Caco-2 (cell line): ENCODE measurements at regions of chr5 and their contacts with region 1.

Region 1: DNA sequence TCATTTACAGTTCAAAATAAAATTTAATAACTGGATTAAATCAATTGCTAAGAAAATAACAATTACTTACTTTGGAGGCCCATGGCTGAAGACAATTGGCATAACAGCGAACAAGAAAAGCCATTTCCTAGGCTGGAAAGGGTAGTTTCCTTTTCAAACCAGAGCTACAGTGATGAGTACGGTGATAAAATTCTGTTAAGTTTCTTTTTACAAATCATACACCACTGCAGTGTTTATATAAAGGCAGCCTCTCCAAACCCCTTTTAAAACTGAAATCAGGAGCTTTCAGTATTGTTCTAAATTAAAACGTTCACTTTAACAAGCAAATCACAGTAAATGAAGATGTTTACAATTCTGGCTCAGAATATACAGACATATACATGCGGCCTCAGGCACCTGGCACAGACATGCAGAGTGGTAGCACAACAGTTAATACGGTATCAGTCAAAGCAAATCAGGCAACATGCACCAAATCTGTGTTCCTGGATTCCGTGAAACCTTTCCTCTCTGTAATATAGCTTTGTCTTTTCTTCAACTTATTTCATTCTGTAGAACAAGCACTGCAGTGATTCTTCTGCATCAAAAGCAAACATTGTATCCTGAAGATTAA is 102.9 kb downstream of the RAPGEF6 start:
- DNase-seq: no peak
- H3K4me3 ChIP-seq: no peak overlapping the region
- H3K4me3 Mint-ChIP-seq: no peak overlapping the region
- H3K27ac Mint-ChIP-seq: no peak overlapping the region
- H3K4me1 ChIP-seq: peaks cover 5% of the 10 kb centered on the region; the same call in 1 of the 2 replicates
- H3K4me1 Mint-ChIP-seq: peaks cover 7% of the 10 kb centered on the region
- H3K27me3 ChIP-seq: no peaks in the 10 kb centered on the region
- H3K27me3 Mint-ChIP-seq: no peaks in the 10 kb centered on the region
- CTCF ChIP-seq: no peak

Region 2: GRCh38 chr5:131634996-131635754 is 103.0 kb after region 1 on chr5 and contains the start of gene RAPGEF6:
- CTCF ChIA-PET with region 1: no interaction called
- POLR2A ChIA-PET with region 1: no interaction called
- intact Hi-C with region 1: no loop called
- DNase-seq: peak; percentile 96 to 99
- H3K4me3 ChIP-seq: peak within 1 kb of the TSS; percentile 74
- H3K4me3 Mint-ChIP-seq: peak within 1 kb of the TSS; percentile 95
- H3K27ac Mint-ChIP-seq: peak within 1 kb of the TSS; percentile 95
- H3K4me1 ChIP-seq: peaks cover 5% of the 10 kb centered on the region
- H3K4me1 Mint-ChIP-seq: no peaks in the 10 kb centered on the region
- H3K27me3 ChIP-seq: no peaks in the 10 kb centered on the region
- H3K27me3 Mint-ChIP-seq: no peaks in the 10 kb centered on the region
- CTCF ChIP-seq: no peak
- total RNA-seq, gene RAPGEF6: 17.4 and 22.4 TPM in 2 replicates

Region 3: DNA sequence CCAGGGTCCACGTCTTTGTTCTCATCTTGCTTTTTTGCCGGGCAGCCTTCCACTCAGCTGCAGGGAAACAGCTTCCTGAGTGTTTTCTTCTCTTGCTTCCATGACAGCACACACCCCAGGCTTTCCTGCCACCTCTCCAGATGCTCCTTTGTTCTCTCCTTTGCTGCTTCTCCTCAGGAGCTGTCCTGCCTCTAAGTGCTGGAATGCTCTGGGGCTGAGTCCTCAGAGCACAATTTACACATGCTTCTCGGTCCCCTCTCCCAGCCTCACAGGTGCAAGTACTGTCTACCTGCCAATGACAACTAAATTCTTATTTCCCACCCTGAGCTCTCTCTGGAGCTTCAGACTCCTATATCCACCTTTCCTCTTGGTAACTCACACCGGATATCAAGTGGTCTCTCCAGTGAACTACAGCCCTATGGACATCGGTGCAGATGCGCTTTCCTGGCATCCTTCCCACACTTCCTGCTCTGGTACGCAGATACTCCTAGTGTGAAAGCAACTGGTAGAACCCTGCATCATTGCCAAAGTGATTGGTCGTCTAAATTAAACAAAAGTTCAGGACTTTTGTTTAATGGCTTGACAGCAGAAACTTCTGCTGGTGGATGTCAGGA is 492.8 kb after region 1 on chr5:
- CTCF ChIA-PET with region 1: interaction called, 10 read pairs
- POLR2A ChIA-PET with region 1: no interaction called
- intact Hi-C with region 1: no loop called
- DNase-seq: peak in 1 of 2 experiments; percentile 24
- H3K4me3 ChIP-seq: no peak overlapping the region
- H3K4me3 Mint-ChIP-seq: no peak overlapping the region
- H3K27ac Mint-ChIP-seq: no peak overlapping the region
- H3K4me1 ChIP-seq: no peaks in the 10 kb centered on the region
- H3K4me1 Mint-ChIP-seq: no peaks in the 10 kb centered on the region
- H3K27me3 ChIP-seq: no peaks in the 10 kb centered on the region
- H3K27me3 Mint-ChIP-seq: peaks cover 18% of the 10 kb centered on the region
- CTCF ChIP-seq: no peak